BJ (cell line): ENCODE measurements at regions of chr9 and their contacts with region 1.

Region 1: DNA sequence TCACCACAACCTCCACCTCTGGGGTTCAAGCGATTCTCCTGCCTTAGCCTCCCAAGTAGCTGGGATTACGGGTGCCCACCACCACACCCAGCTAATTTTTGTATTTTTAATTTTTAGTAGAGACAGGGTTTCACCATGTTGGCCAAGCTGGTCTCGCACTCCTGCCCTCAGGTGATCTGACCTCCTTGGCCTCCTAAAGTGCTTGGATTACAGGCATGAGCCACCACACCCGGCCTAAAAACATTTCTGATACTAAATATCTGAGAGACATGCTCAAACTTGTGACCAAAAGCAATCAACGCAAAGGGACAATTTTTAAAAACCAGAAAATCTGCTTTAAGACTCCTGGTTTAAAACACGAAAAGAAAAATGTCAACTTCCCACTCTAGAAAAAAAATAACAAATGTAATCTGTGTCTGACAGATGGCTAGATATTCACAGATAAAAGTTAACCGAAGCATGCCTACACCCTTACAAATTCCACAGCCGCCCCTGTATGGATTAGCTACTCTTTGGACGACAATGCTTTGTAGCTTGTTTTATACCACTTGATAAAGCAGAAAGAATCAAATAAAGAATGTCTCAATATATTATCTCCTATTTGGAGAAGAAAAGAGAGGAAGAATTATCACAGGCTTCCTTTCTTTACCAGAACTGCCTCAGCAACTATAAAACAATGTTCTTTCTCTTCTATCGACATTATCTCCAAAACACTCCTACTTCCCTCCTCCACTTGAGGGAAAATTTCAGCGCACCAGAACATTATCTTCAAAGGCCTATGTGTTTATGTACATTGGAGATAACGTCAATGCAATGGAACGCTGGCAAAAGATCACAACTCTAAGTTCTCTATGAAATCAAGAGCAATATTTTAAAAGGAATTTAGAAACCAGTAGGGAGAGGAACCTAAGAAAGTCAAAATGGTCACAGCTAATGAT is 26.3 kb downstream of the CEMIP2 start:
- DNase-seq: no peak
- H3K4me3 ChIP-seq: no peak overlapping the region
- H3K27me3 ChIP-seq: no peaks in the 10 kb centered on the region
- CTCF ChIP-seq: no peak

Region 2: GRCh38 chr9:71729816-71730526 is 12.0 kb before region 1 on chr9:
- CTCF ChIA-PET with region 1: no interaction called
- POLR2A ChIA-PET with region 1: no interaction called
- DNase-seq: no peak
- H3K4me3 ChIP-seq: no peak overlapping the region
- H3K27me3 ChIP-seq: no peaks in the 10 kb centered on the region
- CTCF ChIP-seq: no peak

Region 3: DNA sequence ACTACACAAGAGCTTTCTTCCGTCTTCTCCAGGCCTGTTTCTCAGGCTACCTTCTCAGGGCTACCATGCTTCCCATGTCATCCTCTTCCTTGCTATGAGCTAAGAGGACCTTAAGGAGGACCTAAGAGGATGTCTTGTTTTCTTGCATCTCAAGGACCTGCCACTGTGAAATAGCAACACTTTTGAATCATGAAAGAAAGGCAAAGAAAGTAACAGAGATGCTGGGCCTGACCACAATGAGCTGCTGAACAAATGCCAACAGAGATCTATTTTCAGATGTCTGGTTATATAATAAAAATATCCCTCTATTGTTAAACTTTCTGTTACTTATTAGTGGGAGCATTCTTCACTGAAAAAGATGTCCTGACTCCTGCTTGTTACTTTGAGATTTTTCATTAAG is 1373.0 kb after region 1 on chr9:
- CTCF ChIA-PET with region 1: no interaction called
- POLR2A ChIA-PET with region 1: interaction called, 11 read pairs
- DNase-seq: no peak
- H3K4me3 ChIP-seq: no peak overlapping the region
- H3K27me3 ChIP-seq: no peaks in the 10 kb centered on the region
- CTCF ChIP-seq: no peak